GM12878 (cell line): ENCODE measurements at regions of chr9 and their contacts with region 1.

Region 1: GRCh38 chr9:132901856-132902831 is 23.4 kb downstream of the SPACA9 start:
- DNase-seq: peak; percentile 43
- ATAC-seq: peak; percentile 100
- H3K4me3 ChIP-seq: no peak overlapping the region
- H3K27ac ChIP-seq: no peak overlapping the region
- H3K4me1 ChIP-seq: no peaks in the 10 kb centered on the region
- H3K27me3 ChIP-seq: no peaks in the 10 kb centered on the region
- CTCF ChIP-seq: peak; percentile 80 to 93 (median 88); a peak in 5 of 6 replicates
- EP300 ChIP-seq: no peak
- POLR2A ChIP-seq: no peak
- RAD21 ChIP-seq: peak; percentile 74

Region 2: DNA sequence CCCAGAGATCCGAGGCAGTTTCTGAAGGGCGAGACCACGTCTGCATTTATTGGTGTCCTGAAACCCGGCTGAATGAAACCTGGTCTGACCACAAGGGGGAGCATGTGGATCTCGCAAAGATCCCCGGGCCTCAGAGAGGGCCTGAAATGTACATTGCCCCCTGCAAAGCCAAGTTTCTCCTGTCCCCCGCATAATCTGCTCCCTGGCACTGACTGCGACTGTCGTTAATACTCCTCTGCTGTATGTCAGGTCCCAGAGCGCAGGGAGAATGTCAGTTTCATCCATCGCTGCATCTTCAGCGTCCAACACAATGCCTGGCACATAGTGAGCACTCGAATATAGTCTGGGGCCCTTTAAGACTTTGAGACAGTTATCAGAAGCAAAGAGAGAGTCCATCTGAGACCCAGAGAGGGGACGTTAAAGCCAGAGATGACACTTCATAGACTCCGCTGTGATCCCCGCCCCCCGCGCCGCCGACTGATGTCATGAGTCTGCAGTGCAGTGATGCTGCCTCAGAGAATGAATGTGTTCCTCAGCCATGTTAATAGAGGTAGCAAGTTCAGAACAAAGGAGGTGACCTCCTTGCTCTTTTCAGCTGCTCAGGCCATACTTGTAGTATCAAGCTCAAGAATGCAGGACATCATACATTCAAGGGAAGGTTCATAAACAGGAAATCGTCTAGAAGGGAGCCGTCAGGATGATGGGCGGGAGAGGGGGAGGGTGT is 394.2 kb before region 1 on chr9:
- CTCF ChIA-PET with region 1: interaction called, 4 read pairs
- POLR2A ChIA-PET with region 1: no interaction called
- RAD21 ChIA-PET with region 1: no interaction called
- SMC1A ChIA-PET with region 1: no interaction called
- in situ Hi-C with region 1: no loop called
- intact Hi-C with region 1: loop called (anchors 10 kb)
- DNase-seq: no peak
- ATAC-seq: peak; percentile 92
- H3K4me3 ChIP-seq: no peak overlapping the region
- H3K27ac ChIP-seq: no peak overlapping the region
- H3K4me1 ChIP-seq: no peaks in the 10 kb centered on the region
- H3K27me3 ChIP-seq: peaks cover 0 to 3% of the 10 kb centered on the region in 2 experiments; a peak in 2 of 4 replicates
- CTCF ChIP-seq: peak; percentile 74 to 83 (median 77)
- EP300 ChIP-seq: no peak
- POLR2A ChIP-seq: no peak
- RAD21 ChIP-seq: peak; percentile 76

Region 3: DNA sequence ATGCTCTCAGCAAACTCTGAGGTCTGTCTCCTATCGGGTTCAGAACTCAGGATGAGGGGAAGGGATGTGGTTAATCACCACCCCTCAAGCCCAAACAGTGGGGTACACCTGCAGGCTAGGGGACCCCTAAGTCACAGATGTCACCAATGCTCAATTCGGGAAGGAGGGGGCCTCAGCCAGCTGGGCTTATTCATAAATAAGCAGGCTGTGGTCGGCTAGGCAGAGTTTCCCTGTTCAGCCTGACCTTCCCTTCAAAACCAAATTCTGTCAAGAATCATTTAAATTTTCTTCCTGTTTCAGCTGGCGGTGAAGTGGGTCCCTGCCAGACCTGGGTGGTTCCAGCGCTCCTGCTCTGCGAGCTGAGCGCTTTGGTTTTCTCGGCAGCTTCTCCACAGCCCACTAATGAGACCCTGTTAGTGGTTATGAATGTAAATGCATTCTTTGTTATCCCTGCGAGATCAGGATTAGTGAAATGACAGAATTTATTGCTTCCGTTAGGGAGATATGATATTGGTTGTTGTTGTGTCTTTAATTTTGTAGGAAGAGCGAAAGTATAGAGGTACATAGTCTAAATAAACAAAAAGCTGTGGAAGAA is 92.4 kb before region 1 on chr9:
- CTCF ChIA-PET with region 1: interaction called, 5 read pairs
- POLR2A ChIA-PET with region 1: no interaction called
- RAD21 ChIA-PET with region 1: no interaction called
- SMC1A ChIA-PET with region 1: no interaction called
- in situ Hi-C with region 1: no loop called
- intact Hi-C with region 1: loop called (anchors 5 kb)
- DNase-seq: no peak
- ATAC-seq: no peak
- H3K4me3 ChIP-seq: no peak overlapping the region
- H3K27ac ChIP-seq: no peak overlapping the region
- H3K4me1 ChIP-seq: peaks cover 3% of the 10 kb centered on the region; the same call in 1 of the 2 replicates
- H3K27me3 ChIP-seq: peaks cover 2 to 4% of the 10 kb centered on the region in 2 experiments; a peak in 3 of 4 replicates
- CTCF ChIP-seq: no peak
- EP300 ChIP-seq: no peak
- POLR2A ChIP-seq: no peak
- RAD21 ChIP-seq: no peak

Region 4: GRCh38 chr9:132826621-132827360 is 75.4 kb before region 1 on chr9:
- CTCF ChIA-PET with region 1: no interaction called
- POLR2A ChIA-PET with region 1: no interaction called
- RAD21 ChIA-PET with region 1: no interaction called
- SMC1A ChIA-PET with region 1: no interaction called
- in situ Hi-C with region 1: no loop called
- intact Hi-C with region 1: no loop called
- DNase-seq: no peak
- ATAC-seq: no peak
- H3K4me3 ChIP-seq: no peak overlapping the region
- H3K27ac ChIP-seq: no peak overlapping the region
- H3K4me1 ChIP-seq: no peaks in the 10 kb centered on the region
- H3K27me3 ChIP-seq: no peaks in the 10 kb centered on the region; a peak in 3 of 4 replicates
- CTCF ChIP-seq: no peak
- EP300 ChIP-seq: no peak
- POLR2A ChIP-seq: no peak
- RAD21 ChIP-seq: no peak

Region 5: GRCh38 chr9:132877824-132878694 is 24.1 kb before region 1 on chr9 and contains the start of gene AK8:
- CTCF ChIA-PET with region 1: interaction called, 32 read pairs
- POLR2A ChIA-PET with region 1: no interaction called
- RAD21 ChIA-PET with region 1: no interaction called
- SMC1A ChIA-PET with region 1: interaction called, 5 read pairs
- in situ Hi-C with region 1: no loop called
- intact Hi-C with region 1: no loop called
- DNase-seq: no peak
- ATAC-seq: peak; percentile 91
- H3K4me3 ChIP-seq: peak within 1 kb of the TSS; percentile 90
- H3K27ac ChIP-seq: no peak within 1 kb of the TSS
- H3K4me1 ChIP-seq: no peaks in the 10 kb centered on the region
- H3K27me3 ChIP-seq: 0 out of 4 replicates have a peak, but pooled peaks cover 0 to 4% of the 10 kb centered on the region in 2 experiments
- CTCF ChIP-seq: no peak
- EP300 ChIP-seq: no peak
- POLR2A ChIP-seq: peak; percentile 70
- RAD21 ChIP-seq: no peak
- polyA plus RNA-seq, gene AK8: not detected

Region 6: GRCh38 chr9:132973713-132974112 is 71.6 kb after region 1 on chr9:
- CTCF ChIA-PET with region 1: interaction called, 6 read pairs
- POLR2A ChIA-PET with region 1: interaction called, 3 read pairs
- RAD21 ChIA-PET with region 1: no interaction called
- SMC1A ChIA-PET with region 1: interaction called, 3 read pairs
- in situ Hi-C with region 1: no loop called
- intact Hi-C with region 1: loop called (anchors 5 kb)
- DNase-seq: no peak
- ATAC-seq: peak; percentile 24; the same call in 1 of the 3 replicates
- H3K4me3 ChIP-seq: no peak overlapping the region
- H3K27ac ChIP-seq: no peak overlapping the region
- H3K4me1 ChIP-seq: no peaks in the 10 kb centered on the region
- H3K27me3 ChIP-seq: peaks cover 2% of the 10 kb centered on the region in 2 experiments; a peak in 1 of 4 replicates
- CTCF ChIP-seq: no peak
- EP300 ChIP-seq: no peak
- POLR2A ChIP-seq: no peak
- RAD21 ChIP-seq: no peak